Esophagus muscularis mucosa (tissue), 4 donors: ENCODE measurements at regions of chr10 and their contacts with region 1.

Region 1: DNA sequence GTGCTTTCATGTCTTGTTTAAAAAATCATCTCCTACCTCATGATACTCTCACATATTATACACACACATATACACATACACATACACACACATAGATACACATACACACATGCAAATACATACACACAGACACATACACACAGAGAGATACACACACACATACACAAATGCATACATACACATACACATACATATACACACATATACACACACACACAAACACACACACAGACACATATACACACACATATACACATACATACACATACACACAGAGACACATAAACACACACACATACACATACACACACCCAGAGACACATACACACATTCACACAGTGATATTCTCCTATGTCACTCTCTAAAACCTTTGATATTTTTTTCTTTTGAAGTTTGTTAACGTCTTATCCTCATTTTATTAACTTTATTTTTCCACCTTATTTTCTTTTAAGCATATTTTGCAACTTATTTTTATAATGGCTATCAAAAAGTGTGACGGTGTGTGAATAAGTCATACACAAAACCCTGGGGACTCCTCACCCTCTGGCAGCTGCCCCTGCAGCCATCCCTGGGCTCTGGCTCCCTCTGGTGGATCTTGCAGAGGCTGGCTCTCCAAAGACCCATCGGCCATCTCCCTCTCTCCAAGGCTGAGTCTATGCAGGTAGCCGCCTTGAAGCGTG is 3.9 kb upstream of the C10orf120 start:
- DNase-seq: no peak
- H3K4me3 ChIP-seq: no peak overlapping the region
- H3K27ac ChIP-seq: no peak overlapping the region
- H3K4me1 ChIP-seq: no peaks in the 10 kb centered on the region
- H3K27me3 ChIP-seq: peaks cover 0 to 10% (median 0%) of the 10 kb centered on the region in 4 donors
- CTCF ChIP-seq: peak; percentile 66 to 80 (median 69)
- EP300 ChIP-seq: no peak
- POLR2A ChIP-seq: no peak

Region 2: GRCh38 chr10:122279725-122280141 is 423.8 kb before region 1 on chr10:
- intact Hi-C with region 1: loop called (anchors 5 kb)
- DNase-seq: no peak
- H3K4me3 ChIP-seq: no peak overlapping the region
- H3K27ac ChIP-seq: no peak overlapping the region
- H3K4me1 ChIP-seq: peaks cover 0 to 4% (median 0%) of the 10 kb centered on the region in 4 donors
- H3K27me3 ChIP-seq: no peaks in the 10 kb centered on the region
- CTCF ChIP-seq: peak; percentile 36 to 61 (median 45)
- EP300 ChIP-seq: no peak
- POLR2A ChIP-seq: no peak